Calu3 (cell line): ENCODE measurements at regions of chr13 and their contacts with region 1.

Region 1: DNA sequence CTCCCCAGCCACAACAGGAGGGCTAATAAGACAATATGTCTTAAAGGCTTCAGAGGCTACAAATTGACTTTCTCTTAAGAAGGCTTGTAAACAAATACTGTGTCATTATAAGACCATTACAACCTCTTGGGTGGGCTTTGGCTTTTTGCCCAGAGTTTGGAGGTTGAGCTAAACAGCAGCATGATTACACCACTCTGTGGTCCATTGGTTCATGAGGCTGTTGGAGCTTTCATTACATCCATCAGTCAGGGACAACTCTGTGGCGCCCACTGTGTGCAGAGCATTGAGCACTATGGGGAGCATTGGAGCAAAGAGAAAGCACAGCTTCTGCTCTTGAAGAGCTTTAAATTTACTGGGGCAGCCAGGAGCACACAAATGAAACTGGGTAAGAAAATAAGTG is 75.9 kb downstream of the TNFSF11 start:
- DNase-seq: no peak
- H3K4me3 Mint-ChIP-seq: no peak overlapping the region
- H3K27ac Mint-ChIP-seq: no peak overlapping the region
- H3K4me1 Mint-ChIP-seq: no peaks in the 10 kb centered on the region
- H3K27me3 Mint-ChIP-seq: peaks cover 37% of the 10 kb centered on the region
- CTCF ChIP-seq: no peak

Region 2: GRCh38 chr13:42740753-42741152 is 90.9 kb after region 1 on chr13:
- CTCF ChIA-PET with region 1: interaction called, 11 read pairs
- intact Hi-C with region 1: no loop called
- DNase-seq: peak; percentile 60
- H3K4me3 Mint-ChIP-seq: no peak overlapping the region
- H3K27ac Mint-ChIP-seq: no peak overlapping the region
- H3K4me1 Mint-ChIP-seq: no peaks in the 10 kb centered on the region
- H3K27me3 Mint-ChIP-seq: no peaks in the 10 kb centered on the region
- CTCF ChIP-seq: no peak

Region 3: GRCh38 chr13:43044720-43045301 is 395.0 kb after region 1 on chr13:
- CTCF ChIA-PET with region 1: no interaction called
- intact Hi-C with region 1: no loop called
- DNase-seq: no peak
- H3K4me3 Mint-ChIP-seq: peak overlapping the region; percentile 61
- H3K27ac Mint-ChIP-seq: peak overlapping the region; percentile 91
- H3K4me1 Mint-ChIP-seq: peaks cover 63% of the 10 kb centered on the region
- H3K27me3 Mint-ChIP-seq: no peaks in the 10 kb centered on the region
- CTCF ChIP-seq: no peak